SK-N-SH (cell line): ENCODE measurements at regions of chr21 and their contacts with region 1.

Region 1: GRCh38 chr21:45554477-45555175 is 12.4 kb upstream of the SLC19A1 start:
- DNase-seq: peak; percentile 95
- H3K4me3 ChIP-seq: peak overlapping the region; percentile 60 to 90
- H3K27ac ChIP-seq: peak overlapping the region; percentile 56 to 82; a peak in 3 of 4 replicates
- H3K4me1 ChIP-seq: peaks cover 0 to 18% of the 10 kb centered on the region in 2 experiments; a peak in 1 of 4 replicates
- H3K27me3 ChIP-seq: no peaks in the 10 kb centered on the region
- CTCF ChIP-seq: peak; percentile 69
- EP300 ChIP-seq: no peak
- RAD21 ChIP-seq: peak; percentile 72

Region 2: DNA sequence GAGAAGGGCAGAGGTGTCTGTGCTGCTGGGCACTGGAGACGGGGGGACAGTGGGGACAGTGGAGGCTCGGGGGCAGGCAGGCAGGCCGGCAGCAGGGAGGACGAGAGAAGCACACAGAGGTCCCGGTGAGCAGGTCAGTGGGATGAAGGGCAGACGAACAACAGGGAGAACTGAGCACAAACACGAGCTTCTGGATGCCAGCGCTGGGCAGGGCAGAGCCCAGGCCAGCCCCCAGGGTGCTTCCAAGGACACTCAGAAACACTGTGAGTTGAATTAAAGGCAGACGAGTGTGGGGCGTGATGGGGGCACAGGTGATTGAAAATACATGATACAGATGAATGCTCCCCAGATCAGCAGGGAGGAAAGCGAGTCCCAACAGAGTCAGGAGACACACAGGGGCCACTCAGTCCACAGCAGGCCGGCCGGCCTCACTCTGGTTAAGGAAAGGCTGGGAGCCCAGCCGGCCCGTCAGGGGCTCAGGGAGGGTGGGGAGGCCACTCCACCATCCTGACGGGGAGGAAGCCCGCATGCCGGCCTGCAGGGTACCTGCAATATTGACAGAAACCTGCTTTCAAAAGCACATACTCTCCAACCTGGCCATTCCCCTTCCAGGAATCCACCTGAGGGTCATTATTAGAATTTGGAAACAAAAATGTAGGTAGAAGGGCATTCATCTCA is 26.5 kb before region 1 on chr21:
- CTCF ChIA-PET with region 1: no interaction called
- POLR2A ChIA-PET with region 1: no interaction called
- DNase-seq: no peak
- H3K4me3 ChIP-seq: no peak overlapping the region
- H3K27ac ChIP-seq: no peak overlapping the region
- H3K4me1 ChIP-seq: no peaks in the 10 kb centered on the region
- H3K27me3 ChIP-seq: no peaks in the 10 kb centered on the region
- CTCF ChIP-seq: no peak
- EP300 ChIP-seq: no peak
- RAD21 ChIP-seq: no peak

Region 3: DNA sequence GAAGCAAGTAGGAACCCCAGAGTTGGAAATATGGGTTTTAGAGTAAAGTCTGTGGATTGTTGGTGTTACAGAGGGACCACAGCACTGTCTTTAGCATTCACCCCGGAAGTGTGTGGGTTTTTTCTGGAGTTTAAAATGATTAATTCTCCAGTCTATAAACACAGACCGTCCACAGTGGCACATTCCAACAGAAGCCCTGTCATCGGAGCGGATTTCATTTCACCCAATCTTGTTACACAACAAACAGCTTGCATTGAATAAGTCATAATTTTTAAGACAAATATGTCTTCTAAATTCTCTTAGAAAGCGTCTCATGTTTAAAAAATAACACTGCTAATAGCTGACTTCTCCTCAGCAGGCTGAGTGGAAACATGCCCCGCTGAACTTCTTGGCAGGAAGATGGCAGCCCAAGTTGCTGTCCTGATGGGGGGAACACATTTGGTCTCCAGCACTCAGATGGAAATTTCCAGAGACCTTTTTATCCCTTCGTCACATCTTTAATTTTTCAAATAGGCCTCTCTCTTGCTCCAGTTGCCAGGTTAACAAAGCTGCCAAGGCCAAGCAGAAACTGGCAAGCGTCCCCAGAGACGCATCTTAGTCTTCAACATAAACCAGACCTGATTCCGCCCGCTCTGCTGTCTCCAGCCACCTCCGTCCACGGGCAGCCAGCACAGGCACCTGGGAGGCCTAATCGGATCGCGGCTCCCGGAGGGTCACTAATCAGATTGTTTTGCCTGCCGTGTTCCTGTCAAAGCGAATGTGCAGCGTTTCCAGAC is 16.4 kb after region 1 on chr21:
- CTCF ChIA-PET with region 1: interaction called, 44 read pairs
- POLR2A ChIA-PET with region 1: interaction called, 11 read pairs
- DNase-seq: peak; percentile 86
- H3K4me3 ChIP-seq: no peak overlapping the region
- H3K27ac ChIP-seq: peak overlapping the region in 1 of 2 experiments; percentile 96; a peak in 2 of 4 replicates
- H3K4me1 ChIP-seq: peaks cover 0 to 52% of the 10 kb centered on the region in 2 experiments; a peak in 2 of 4 replicates
- H3K27me3 ChIP-seq: 0 out of 2 replicates have a peak, but pooled peaks cover 5% of the 10 kb centered on the region
- CTCF ChIP-seq: no peak
- EP300 ChIP-seq: peak in 1 of 2 experiments; percentile 80; a peak in 2 of 4 replicates
- RAD21 ChIP-seq: no peak

Region 4: DNA sequence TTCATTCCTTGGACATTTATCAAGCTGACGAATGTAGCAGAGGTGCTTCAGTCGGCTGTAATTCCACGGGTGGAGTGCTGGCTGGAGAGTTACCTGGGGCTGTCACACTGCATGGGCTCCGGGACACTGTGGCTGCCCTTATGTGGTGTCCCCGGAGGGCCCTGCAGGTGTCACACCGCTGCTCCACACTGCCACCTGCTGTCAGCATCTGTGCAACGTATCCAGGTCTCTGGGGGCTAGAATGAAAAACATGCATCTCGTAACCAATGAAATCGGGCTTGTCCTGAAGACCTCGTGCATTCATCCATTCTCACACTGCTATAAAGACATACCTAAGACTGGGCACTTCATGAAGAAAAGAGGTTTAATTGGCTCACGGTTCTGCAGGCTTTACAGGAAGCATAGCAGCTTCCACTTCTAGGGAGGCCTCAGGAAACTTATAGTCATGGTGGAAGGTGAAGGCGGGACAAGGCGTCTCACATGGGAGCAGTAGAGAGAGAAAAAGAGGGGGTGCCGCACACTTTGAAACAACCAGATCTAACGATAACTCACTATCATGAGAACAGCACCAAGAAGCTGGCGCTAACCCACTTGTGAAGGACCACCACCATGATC is 42.2 kb after region 1 on chr21:
- CTCF ChIA-PET with region 1: interaction called, 135 read pairs
- POLR2A ChIA-PET with region 1: interaction called, 15 read pairs
- DNase-seq: peak; percentile 87
- H3K4me3 ChIP-seq: no peak overlapping the region
- H3K27ac ChIP-seq: no peak overlapping the region
- H3K4me1 ChIP-seq: peaks cover 0 to 9% of the 10 kb centered on the region in 2 experiments; a peak in 1 of 4 replicates
- H3K27me3 ChIP-seq: no peaks in the 10 kb centered on the region
- CTCF ChIP-seq: peak; percentile 78
- EP300 ChIP-seq: no peak
- RAD21 ChIP-seq: peak; percentile 75

Region 5: GRCh38 chr21:45640888-45641479 is 86.4 kb after region 1 on chr21:
- CTCF ChIA-PET with region 1: interaction called, 45 read pairs
- POLR2A ChIA-PET with region 1: interaction called, 13 read pairs
- DNase-seq: no peak
- H3K4me3 ChIP-seq: no peak overlapping the region
- H3K27ac ChIP-seq: peak overlapping the region in 1 of 2 experiments; percentile 82; a peak in 2 of 4 replicates
- H3K4me1 ChIP-seq: peaks cover 21 to 39% of the 10 kb centered on the region in 2 experiments
- H3K27me3 ChIP-seq: no peaks in the 10 kb centered on the region
- CTCF ChIP-seq: no peak
- EP300 ChIP-seq: no peak
- RAD21 ChIP-seq: no peak

Region 6: DNA sequence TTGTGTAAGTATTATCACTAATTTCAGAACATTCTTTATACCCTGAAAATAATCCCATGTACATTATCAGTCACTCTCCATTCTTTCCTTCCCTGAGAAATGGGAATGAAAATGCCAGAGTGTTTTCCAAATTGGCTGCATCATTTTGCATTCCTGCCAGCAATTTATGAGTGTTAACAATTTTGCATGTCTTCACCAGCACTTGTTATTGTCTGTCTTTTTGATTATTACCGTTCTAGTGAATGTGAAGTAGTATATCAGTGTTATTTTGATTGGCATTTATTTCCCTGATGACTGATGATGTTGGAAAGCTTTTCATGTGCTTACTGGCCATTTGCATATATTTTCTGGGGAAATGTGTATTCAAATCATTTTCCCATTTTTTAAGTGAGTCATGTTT is 160.8 kb after region 1 on chr21:
- CTCF ChIA-PET with region 1: no interaction called
- POLR2A ChIA-PET with region 1: no interaction called
- DNase-seq: no peak
- H3K4me3 ChIP-seq: no peak overlapping the region
- H3K27ac ChIP-seq: no peak overlapping the region
- H3K4me1 ChIP-seq: peaks cover 0 to 7% of the 10 kb centered on the region in 2 experiments; a peak in 1 of 4 replicates
- H3K27me3 ChIP-seq: no peaks in the 10 kb centered on the region
- CTCF ChIP-seq: no peak
- EP300 ChIP-seq: no peak
- RAD21 ChIP-seq: no peak

Region 7: DNA sequence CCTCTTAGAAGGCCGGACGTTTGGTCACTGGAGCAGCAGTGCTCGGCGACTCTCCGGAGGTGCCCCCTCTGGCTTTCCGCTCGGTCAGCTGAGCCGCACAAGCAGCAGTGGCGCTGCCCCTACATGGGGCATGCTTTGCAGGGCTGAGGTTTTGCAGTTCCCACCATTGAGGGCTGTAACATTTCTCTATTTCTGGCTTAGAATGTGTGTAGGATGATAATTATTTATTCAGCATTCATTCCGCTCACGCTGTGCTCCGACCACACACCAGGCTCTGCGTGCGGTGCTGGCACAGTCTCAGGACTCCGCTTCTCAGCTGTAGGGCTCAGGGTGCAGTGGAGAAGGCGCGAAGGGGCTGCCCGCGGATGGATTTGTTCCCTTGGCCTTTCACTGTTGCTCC is 208.4 kb after region 1 on chr21:
- CTCF ChIA-PET with region 1: interaction called, 16 read pairs
- POLR2A ChIA-PET with region 1: no interaction called
- DNase-seq: no peak
- H3K4me3 ChIP-seq: no peak overlapping the region
- H3K27ac ChIP-seq: no peak overlapping the region
- H3K4me1 ChIP-seq: peaks cover 14 to 61% of the 10 kb centered on the region in 2 experiments
- H3K27me3 ChIP-seq: no peaks in the 10 kb centered on the region
- CTCF ChIP-seq: no peak
- EP300 ChIP-seq: no peak
- RAD21 ChIP-seq: no peak

Region 8: DNA sequence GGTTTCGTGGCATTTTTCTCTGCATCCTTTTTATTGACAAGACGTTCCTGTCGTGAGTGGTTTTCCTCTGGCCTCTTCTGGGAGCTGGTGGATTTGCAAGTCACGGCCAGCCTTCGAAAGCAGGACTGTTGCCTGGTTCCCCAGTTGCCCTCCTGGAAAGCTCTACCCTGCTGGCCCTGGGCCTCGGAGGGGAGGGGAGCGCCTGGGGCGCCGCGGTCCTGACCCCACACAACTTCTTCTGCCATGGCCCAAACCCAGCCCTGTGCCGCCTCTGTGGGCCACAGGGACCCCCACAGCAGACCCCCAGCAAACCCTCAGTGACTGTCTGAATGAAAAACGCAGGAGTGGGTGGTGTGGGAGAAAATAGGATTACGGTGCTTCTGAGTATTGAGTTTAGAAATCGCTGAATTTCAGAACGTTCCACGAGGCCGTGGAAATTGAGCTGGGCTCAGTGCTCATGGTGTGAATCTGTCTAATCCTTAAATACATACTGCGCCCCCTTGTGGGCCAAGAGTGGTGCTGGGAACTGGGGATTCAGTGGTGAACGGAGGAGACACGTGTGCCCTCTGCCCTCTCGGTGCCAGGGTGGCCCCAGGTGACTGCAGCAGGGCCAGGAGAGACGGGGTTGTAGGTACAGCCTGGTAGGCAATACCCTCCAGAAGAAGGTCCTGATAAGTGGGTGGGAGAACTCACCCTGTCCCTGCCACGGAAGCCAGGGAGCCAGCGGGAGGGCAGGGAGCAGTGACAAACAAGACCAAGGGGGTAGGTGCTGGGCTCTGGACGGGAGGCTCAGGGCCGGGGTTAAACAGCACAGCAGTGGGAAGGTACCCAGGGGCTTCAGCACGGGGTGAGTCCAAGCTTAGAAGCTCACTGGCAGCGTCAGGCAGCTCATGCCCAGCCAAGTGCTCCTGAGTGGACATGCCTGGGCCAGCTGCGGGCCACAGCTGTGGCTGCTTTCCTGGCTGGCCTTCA is 325.8 kb after region 1 on chr21:
- CTCF ChIA-PET with region 1: interaction called, 17 read pairs
- POLR2A ChIA-PET with region 1: interaction called, 4 read pairs
- DNase-seq: peak; percentile 32
- H3K4me3 ChIP-seq: no peak overlapping the region
- H3K27ac ChIP-seq: peak overlapping the region in 1 of 2 experiments; percentile 39; a peak in 1 of 4 replicates
- H3K4me1 ChIP-seq: peaks cover 9 to 40% of the 10 kb centered on the region in 2 experiments; a peak in 3 of 4 replicates
- H3K27me3 ChIP-seq: no peaks in the 10 kb centered on the region
- CTCF ChIP-seq: peak; percentile 73
- EP300 ChIP-seq: no peak
- RAD21 ChIP-seq: peak; percentile 63